Body of pancreas (tissue), 4 donors: ENCODE measurements at regions of chr3 and their contacts with region 1.

Region 1: GRCh38 chr3:42780892-42781700 is 8.0 kb upstream of the CCDC13 start:
- DNase-seq: peak in 1 of 4 donors; percentile 48
- ATAC-seq: peak; percentile 72
- H3K4me3 ChIP-seq: no peak overlapping the region
- H3K27ac ChIP-seq: peak overlapping the region in 3 of 4 donors; percentile 44 to 80 (median 75)
- H3K4me1 ChIP-seq: peaks cover 30% of the 10 kb centered on the region
- H3K27me3 ChIP-seq: no peaks in the 10 kb centered on the region
- CTCF ChIP-seq: peak; percentile 42 to 82 (median 80)
- POLR2A ChIP-seq: no peak

Region 2: GRCh38 chr3:42690766-42691680 is 90.1 kb before region 1 on chr3:
- intact Hi-C with region 1: no loop called
- DNase-seq: no peak
- ATAC-seq: no peak
- H3K4me3 ChIP-seq: no peak overlapping the region
- H3K27ac ChIP-seq: no peak overlapping the region
- H3K4me1 ChIP-seq: peaks cover 2% of the 10 kb centered on the region
- H3K27me3 ChIP-seq: peaks cover 0 to 6% of the 10 kb centered on the region in 2 donors
- CTCF ChIP-seq: no peak
- POLR2A ChIP-seq: no peak

Region 3: GRCh38 chr3:42839616-42840015 is 58.5 kb after region 1 on chr3:
- intact Hi-C with region 1: loop called (anchors 5 kb)
- DNase-seq: peak; percentile 30 to 59 (median 45)
- ATAC-seq: peak; percentile 87
- H3K4me3 ChIP-seq: no peak overlapping the region
- H3K27ac ChIP-seq: no peak overlapping the region
- H3K4me1 ChIP-seq: no peaks in the 10 kb centered on the region
- H3K27me3 ChIP-seq: no peaks in the 10 kb centered on the region
- CTCF ChIP-seq: peak; percentile 53 to 95 (median 90)
- POLR2A ChIP-seq: no peak

Region 4: GRCh38 chr3:42991341-42992315 is 210.5 kb after region 1 on chr3:
- intact Hi-C with region 1: no loop called
- DNase-seq: no peak
- ATAC-seq: no peak
- H3K4me3 ChIP-seq: no peak overlapping the region
- H3K27ac ChIP-seq: no peak overlapping the region
- H3K4me1 ChIP-seq: peaks cover 2% of the 10 kb centered on the region
- H3K27me3 ChIP-seq: no peaks in the 10 kb centered on the region
- CTCF ChIP-seq: no peak
- POLR2A ChIP-seq: no peak